ENCODE measurements at regions of chr12 and their contacts with region 1.

Region 1: DNA sequence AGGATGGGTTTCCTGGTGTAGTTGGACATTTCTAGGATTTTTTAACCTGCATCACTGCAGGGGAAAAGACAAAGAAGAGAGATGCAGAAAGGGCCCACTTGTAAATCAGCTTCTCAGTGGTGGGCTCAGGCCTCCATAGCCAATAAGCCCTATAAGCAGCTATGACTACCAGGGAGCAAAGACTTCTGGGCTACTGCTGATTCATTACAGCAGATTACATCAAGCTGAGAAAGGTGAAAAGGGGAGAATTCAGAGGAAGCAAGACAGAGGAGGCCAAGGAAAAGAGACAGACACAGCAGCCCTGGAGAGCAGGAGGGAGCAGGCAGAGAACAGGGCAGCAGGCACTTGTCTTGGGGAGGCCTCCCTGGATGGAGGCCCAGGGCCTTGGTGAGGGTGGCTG is 95.2 kb downstream of the KCNA5 start:
- ATAC-seq: peak in 5 of 8 experiments; percentile 77 to 98 (median 93)
- H3K4me3 ChIP-seq: no peak overlapping the region
- H3K27ac ChIP-seq: no peak overlapping the region
- H3K4me1 ChIP-seq: no peaks in the 10 kb centered on the region

Region 2: GRCh38 chr12:4975574-4975973 is 163.3 kb before region 1 on chr12:
- in situ Hi-C with region 1: no loop called
- ATAC-seq: peak in 2 of 8 experiments; percentile 24 to 79
- H3K4me3 ChIP-seq: no peak overlapping the region
- H3K27ac ChIP-seq: no peak overlapping the region
- H3K4me1 ChIP-seq: no peaks in the 10 kb centered on the region

Region 3: GRCh38 chr12:5244513-5244972 is 105.7 kb after region 1 on chr12:
- in situ Hi-C with region 1: loop called in 1 of 9 experiments (anchors 25 kb)
- ATAC-seq: peak; percentile 52 to 94 (median 79)
- H3K4me3 ChIP-seq: no peak overlapping the region
- H3K27ac ChIP-seq: no peak overlapping the region
- H3K4me1 ChIP-seq: peaks cover 22 to 34% of the 10 kb centered on the region in 2 donors

Region 4: DNA sequence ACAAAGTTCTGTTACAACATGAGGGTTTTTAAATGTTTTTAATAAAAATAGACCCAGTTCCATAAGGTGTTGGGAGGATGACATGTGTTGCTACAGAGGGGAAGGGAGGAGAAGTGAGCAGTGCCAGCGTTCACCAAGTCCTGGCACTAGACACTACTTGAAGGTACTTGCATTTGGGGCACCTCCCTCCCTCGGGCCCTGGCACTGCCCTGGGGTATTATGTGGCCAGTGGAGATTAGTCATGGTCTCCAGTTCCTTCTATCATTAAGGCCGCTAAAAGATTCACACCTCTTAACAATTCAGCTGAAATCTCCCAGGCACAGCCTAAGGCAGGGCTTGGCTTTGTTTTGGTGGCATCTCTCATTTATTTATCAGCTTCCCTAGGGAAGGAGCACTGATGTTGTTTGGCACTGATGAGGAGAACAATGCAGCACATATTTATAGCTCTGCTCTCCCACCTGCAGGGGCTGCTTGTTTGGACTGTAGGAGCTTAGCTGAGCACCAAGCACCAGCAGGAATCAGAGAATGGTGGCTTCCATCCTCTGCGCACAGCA is 137.6 kb after region 1 on chr12:
- in situ Hi-C with region 1: no loop called
- ATAC-seq: no peak
- H3K4me3 ChIP-seq: no peak overlapping the region
- H3K27ac ChIP-seq: no peak overlapping the region
- H3K4me1 ChIP-seq: peaks cover 11 to 24% of the 10 kb centered on the region in 2 donors

Region 5: DNA sequence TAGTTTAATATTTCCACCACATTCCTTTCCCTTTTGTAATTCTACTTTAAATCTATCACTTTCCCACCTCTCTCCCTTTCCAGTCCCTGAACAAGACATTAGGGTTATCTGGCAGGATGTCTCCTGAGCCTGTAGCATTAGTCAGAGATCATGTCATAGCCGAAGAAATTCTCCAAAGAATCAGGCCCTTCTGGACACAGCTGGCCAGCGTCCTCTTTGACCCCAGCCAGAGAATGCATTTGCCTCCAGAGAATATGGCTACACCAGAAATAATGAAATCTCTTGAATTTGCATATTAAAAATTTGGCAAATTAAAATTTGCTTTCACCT is 349.7 kb after region 1 on chr12:
- in situ Hi-C with region 1: no loop called
- ATAC-seq: peak in 3 of 8 experiments; percentile 40 to 67 (median 45)
- H3K4me3 ChIP-seq: no peak overlapping the region
- H3K27ac ChIP-seq: no peak overlapping the region
- H3K4me1 ChIP-seq: peaks cover 0 to 11% of the 10 kb centered on the region in 2 donors

Measured in motor neuron (in vitro differentiated cells).